ENCODE measurements at regions of chr7 and their contacts with region 1.

Region 1: GRCh38 chr7:44638611-44639557 is 32.5 kb downstream of the OGDH start:
- DNase-seq: peak; percentile 90
- ATAC-seq: peak; percentile 71
- H3K4me3 Mint-ChIP-seq: peak overlapping the region; percentile 73
- H3K27ac Mint-ChIP-seq: peak overlapping the region; percentile 100
- H3K4me1 Mint-ChIP-seq: peaks cover 75% of the 10 kb centered on the region
- H3K27me3 Mint-ChIP-seq: no peaks in the 10 kb centered on the region

Region 2: GRCh38 chr7:44383566-44383965 is 255.3 kb before region 1 on chr7:
- CTCF ChIA-PET with region 1: no interaction called
- POLR2A ChIA-PET with region 1: no interaction called
- intact Hi-C with region 1: no loop called
- DNase-seq: no peak
- ATAC-seq: no peak
- H3K4me3 Mint-ChIP-seq: no peak overlapping the region
- H3K27ac Mint-ChIP-seq: no peak overlapping the region
- H3K4me1 Mint-ChIP-seq: no peaks in the 10 kb centered on the region
- H3K27me3 Mint-ChIP-seq: no peaks in the 10 kb centered on the region

Region 3: DNA sequence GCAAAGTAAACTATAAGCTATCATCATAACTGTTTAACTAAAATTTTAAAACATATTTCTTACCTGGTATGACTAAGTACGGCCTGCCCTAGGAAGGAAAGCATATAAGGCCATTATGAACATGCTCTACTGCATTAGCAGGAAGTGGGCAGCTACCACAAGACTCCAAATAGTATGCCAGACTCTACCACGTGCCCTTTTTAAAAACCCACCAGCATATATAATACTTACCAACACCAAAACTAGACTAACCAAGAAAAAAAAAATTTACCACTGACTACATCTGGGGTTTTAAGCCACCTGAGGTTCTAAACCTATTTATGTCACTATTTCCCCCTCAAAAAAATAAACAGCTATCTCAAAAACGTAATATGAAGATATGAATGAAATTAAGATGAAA is 178.6 kb before region 1 on chr7:
- CTCF ChIA-PET with region 1: no interaction called
- POLR2A ChIA-PET with region 1: no interaction called
- intact Hi-C with region 1: loop called in 1 of 2 experiments (anchors 1 kb)
- DNase-seq: peak; percentile 72
- ATAC-seq: peak; percentile 85
- H3K4me3 Mint-ChIP-seq: peak overlapping the region; percentile 55
- H3K27ac Mint-ChIP-seq: peak overlapping the region; percentile 100
- H3K4me1 Mint-ChIP-seq: peaks cover 66% of the 10 kb centered on the region
- H3K27me3 Mint-ChIP-seq: no peaks in the 10 kb centered on the region

Region 4: DNA sequence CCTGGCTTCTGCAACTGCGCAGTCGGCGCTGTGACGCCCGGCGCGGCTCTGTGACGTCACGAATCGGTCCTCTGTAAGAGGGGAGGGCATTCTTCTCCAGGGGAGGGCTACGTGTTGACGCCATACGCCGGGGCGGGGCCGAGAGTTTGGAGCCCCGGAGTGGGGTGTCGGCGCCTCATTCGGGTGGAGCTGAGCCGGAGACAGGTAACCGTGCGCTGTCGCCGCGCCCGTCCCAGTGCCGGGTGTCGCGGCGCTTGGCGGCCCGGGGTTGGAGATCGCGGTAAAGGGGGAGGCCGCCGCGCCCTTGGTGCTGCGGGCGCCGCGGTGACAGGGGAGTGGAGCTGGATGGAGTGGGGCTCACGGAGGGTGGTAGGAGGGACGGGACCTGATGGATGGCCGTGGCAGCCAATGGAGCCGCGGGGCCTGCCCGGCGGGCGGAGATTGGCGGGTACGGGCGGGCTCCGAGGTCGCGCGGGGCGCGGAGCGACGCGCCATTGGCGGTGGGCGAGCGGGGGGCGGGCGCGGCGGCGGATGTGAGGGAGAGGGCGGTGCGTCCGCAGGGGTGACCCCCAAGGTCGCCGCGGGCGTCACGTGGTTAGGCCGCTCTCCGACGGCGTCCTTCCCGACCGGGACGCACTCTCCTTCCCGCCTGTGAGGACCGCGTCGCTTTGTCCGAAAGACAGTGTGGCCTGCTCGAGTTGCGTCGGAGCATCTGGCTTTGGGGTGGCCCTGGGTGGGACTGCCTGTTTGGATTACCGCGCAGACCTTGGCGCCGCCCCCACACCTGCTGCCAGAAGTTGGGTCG is 32.2 kb before region 1 on chr7 and contains the start of gene OGDH:
- CTCF ChIA-PET with region 1: interaction called, 7 read pairs
- POLR2A ChIA-PET with region 1: interaction called, 23 read pairs
- intact Hi-C with region 1: loop called (anchors 1 kb)
- DNase-seq: peak; percentile 100
- ATAC-seq: peak; percentile 98
- H3K4me3 Mint-ChIP-seq: peak within 1 kb of the TSS; percentile 92
- H3K27ac Mint-ChIP-seq: peak within 1 kb of the TSS; percentile 97
- H3K4me1 Mint-ChIP-seq: peaks cover 33% of the 10 kb centered on the region
- H3K27me3 Mint-ChIP-seq: no peaks in the 10 kb centered on the region
- total RNA-seq, gene OGDH: 80.3 to 90.1 TPM

Region 5: DNA sequence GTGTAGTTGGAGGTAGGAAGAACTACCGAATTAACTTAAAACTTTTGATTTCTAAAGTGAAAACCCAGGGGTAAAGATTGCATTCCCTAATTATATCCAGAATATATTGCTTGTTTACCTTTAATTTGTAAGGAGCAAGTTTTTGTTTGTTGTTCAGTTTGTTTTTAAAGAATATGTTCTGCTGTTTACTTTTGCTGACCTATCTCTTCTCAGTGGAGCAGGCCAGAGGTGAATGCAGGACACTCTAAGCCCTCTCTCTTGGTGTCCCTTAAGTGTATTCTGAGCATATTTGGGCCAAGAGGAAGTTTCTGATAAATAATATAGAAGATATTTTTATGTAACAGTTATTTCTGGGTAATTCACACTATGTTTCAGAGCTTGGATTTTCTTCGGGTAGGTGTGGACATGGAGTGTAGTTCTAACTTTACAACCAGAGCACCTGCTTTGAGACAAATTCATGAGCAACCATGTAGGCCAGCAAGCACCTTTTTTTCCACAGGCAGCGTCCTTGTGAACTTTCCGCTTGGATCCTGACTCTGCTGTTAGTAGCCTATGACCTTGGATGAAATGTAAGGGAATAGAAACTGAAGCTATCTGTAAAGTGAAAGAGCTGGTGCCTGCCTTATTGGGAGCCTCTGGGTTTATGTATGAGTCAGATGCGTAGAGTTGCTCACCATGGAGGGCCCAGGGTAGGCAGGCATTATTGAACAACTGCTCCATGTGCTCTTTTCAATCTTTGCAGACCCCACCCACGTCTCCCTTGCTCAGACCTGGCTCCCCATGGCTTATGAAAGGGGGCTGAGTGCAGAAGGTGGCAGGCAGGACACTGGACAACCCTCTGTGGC is 16.4 kb before region 1 on chr7:
- CTCF ChIA-PET with region 1: interaction called, 19 read pairs
- POLR2A ChIA-PET with region 1: interaction called, 29 read pairs
- intact Hi-C with region 1: loop called (anchors 1 kb)
- DNase-seq: peak; percentile 72
- ATAC-seq: peak; percentile 90
- H3K4me3 Mint-ChIP-seq: peak overlapping the region; percentile 50
- H3K27ac Mint-ChIP-seq: peak overlapping the region; percentile 94
- H3K4me1 Mint-ChIP-seq: peaks cover 90% of the 10 kb centered on the region
- H3K27me3 Mint-ChIP-seq: no peaks in the 10 kb centered on the region

Region 6: DNA sequence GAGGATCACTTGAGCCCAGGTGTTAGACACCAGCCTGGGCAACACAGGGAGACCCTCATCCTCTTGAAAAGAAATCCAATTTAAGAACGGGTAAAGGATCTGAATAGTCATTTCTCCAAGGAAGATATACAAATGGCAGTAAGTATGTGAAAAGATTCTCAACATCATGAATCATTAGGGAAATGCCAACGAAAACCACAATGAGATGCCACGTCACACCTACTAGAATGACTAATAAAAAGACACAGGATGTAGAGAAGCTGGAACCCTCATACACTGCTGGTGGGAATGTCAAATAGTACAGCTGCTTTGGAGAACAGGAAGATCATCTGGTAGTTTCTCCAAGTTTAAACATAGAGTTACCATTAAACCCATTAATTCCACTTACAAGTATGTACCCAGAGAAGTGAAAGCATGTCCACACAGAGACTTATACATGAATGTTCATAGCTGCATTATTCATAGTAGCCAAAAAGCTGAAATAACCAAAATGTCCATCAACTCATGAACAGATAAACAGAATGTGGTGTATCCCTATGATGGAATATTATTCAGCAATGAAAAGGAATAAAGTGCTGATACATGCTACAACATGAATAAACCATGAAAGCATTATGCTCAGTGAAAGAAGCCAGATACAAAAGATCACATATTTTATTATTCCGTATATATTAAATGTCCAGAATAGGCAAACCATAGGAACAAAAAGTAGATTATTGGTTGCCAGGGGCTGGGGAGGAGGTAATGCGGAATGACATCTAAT is 96.7 kb after region 1 on chr7:
- CTCF ChIA-PET with region 1: interaction called, 3 read pairs
- POLR2A ChIA-PET with region 1: interaction called, 3 read pairs
- intact Hi-C with region 1: loop called (anchors 1 kb)
- DNase-seq: peak; percentile 69
- ATAC-seq: peak; percentile 93
- H3K4me3 Mint-ChIP-seq: peak overlapping the region; percentile 6
- H3K27ac Mint-ChIP-seq: peak overlapping the region; percentile 81
- H3K4me1 Mint-ChIP-seq: peaks cover 24% of the 10 kb centered on the region
- H3K27me3 Mint-ChIP-seq: no peaks in the 10 kb centered on the region

Measured in activated CD4-positive, alpha-beta T cell treated with anti-CD3 and anti-CD28 coated beads for 36 hours (primary cell).